ENCODE measurements at regions of chr18 and their contacts with region 1.

Region 1: DNA sequence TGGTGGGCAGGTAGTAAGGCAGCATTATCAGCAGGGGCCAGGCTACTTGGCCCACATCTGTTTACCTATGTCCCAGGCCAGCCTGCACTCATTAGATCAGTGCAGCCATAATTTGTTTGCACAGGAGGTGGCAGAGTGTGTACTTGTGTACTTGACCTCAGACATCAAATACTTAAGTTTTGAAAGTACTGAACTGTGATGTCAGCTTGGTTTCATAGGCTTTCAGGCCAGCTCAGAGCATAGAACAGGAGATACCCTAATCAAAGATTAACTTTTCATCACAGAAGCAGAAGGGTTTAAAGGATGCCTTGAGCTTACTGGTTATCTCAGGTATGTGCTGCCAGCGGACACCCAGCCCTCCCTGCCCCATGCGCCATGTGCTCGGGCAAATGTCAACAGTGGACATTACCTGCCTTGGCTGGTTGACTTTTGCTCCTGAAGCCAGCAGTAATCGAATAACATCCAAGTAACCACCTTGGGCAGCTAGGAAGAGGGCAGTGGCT is 33.2 kb downstream of the ANKRD29 start:
- DNase-seq: peak; percentile 27
- H3K4me3 ChIP-seq: no peak overlapping the region
- H3K27ac ChIP-seq: peak overlapping the region in 2 of 4 donors; percentile 8 to 32
- H3K4me1 ChIP-seq: peaks cover 0 to 23% (median 6%) of the 10 kb centered on the region in 4 donors
- H3K27me3 ChIP-seq: no peaks in the 10 kb centered on the region
- CTCF ChIP-seq: no peak
- EP300 ChIP-seq: no peak
- POLR2A ChIP-seq: no peak

Region 2: DNA sequence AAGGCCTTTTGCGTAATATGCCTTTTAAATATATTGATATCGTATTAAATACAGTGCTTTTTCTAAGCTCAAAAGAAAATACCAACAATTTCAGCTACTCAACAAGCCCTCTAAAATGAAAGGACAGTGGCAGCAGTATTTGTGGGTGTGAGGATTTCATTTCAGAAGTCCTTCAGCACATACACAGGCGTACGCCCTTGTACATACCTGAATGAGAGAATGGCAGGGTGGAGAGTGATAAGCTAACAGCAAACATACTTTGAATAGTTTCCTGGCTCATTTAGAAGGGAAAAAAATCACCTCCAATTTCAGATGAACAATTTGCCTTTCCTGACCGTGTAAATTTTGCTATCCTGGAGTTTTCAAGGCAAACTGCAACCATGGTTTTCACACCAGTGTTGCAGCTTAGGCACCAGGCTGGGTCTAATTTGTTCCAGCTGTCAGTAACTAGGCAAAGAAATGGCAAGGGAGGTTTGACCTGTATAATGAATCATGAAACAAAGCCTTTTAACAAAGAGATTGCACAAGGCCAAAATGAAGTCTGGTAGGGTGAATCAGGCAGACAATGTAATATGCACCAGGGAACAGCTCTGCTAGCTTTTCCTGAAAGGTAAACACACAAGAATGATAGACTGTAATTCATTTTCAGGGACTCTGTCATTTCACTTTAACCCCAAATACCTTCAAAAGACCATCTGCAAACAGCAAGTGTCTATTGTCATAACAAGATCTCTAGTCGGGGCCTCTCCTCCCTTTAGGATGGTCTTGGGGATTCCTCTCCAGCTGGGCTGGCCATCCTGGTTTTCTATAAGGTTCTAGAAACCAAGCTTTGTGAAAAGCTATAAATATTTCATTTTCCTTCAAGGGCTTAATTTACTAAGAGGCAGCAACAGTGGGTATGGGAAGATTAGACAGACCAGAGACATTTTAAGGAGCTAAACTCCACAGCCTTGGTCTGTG is 21.8 kb after region 1 on chr18:
- in situ Hi-C with region 1: no loop called
- intact Hi-C with region 1: no loop called
- DNase-seq: no peak
- H3K4me3 ChIP-seq: no peak overlapping the region
- H3K27ac ChIP-seq: no peak overlapping the region
- H3K4me1 ChIP-seq: peaks cover 0 to 5% (median 0%) of the 10 kb centered on the region in 4 donors
- H3K27me3 ChIP-seq: no peaks in the 10 kb centered on the region
- CTCF ChIP-seq: no peak
- EP300 ChIP-seq: no peak
- POLR2A ChIP-seq: no peak

Region 3: GRCh38 chr18:23689031-23689615 is 59.6 kb after region 1 on chr18 and contains the start of gene LAMA3:
- in situ Hi-C with region 1: loop called in 1 of 4 experiments (anchors 10 kb)
- intact Hi-C with region 1: no loop called
- DNase-seq: peak; percentile 61
- H3K4me3 ChIP-seq: peak within 1 kb of the TSS; percentile 26 to 60 (median 48)
- H3K27ac ChIP-seq: peak within 1 kb of the TSS in 1 of 4 donors; percentile 22
- H3K4me1 ChIP-seq: peaks cover 4 to 28% (median 23%) of the 10 kb centered on the region in 4 donors
- H3K27me3 ChIP-seq: peaks cover 45% of the 10 kb centered on the region
- CTCF ChIP-seq: peak in 1 of 5 experiments; percentile 21
- EP300 ChIP-seq: no peak
- POLR2A ChIP-seq: no peak
- total RNA-seq, gene LAMA3: 17.5 to 71.8 (median 47.4) TPM

Region 4: DNA sequence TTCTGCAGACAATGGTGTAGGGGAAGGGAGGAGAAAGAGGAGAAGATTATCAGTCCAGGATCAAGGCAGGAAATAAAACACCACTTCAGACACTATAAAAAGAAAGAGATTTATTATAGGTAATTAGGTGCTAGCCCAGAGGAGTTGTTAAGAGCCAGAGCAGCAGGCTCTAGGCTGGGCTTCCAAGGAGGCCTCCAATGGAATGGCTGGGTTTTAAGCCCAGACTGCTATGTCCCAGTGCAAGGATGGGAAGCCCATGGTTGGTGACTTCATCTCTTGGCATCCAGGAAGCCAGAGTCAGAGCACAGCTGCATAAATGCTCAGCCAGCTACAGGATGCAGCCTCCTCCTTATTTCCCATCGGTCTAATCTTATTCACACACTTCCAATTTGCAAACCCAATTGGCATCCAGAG is 155.3 kb after region 1 on chr18:
- in situ Hi-C with region 1: no loop called
- intact Hi-C with region 1: no loop called
- DNase-seq: peak; percentile 16
- H3K4me3 ChIP-seq: no peak overlapping the region
- H3K27ac ChIP-seq: no peak overlapping the region
- H3K4me1 ChIP-seq: peaks cover 0 to 12% (median 0%) of the 10 kb centered on the region in 4 donors
- H3K27me3 ChIP-seq: no peaks in the 10 kb centered on the region
- CTCF ChIP-seq: no peak
- EP300 ChIP-seq: no peak
- POLR2A ChIP-seq: no peak

Region 5: DNA sequence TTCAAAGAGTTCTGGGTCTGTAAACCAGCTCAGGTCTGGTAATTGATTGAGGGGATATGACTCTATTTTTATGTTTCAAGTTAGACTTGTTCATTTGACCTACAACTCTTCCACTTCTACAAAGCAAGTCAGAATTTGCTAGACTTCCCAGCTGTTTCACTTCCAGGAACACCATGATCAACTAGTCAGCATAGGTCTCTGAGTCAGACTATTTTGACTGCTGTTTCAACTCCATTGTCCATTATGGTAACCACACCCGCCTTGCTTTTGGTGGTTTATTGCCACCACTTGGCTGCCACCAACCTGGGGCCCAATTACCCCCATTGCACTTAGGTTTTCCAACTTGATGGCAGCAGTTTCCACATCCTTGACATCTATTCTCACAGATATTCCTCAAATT is 176.4 kb after region 1 on chr18:
- in situ Hi-C with region 1: loop called (anchors 10 to 25 kb)
- intact Hi-C with region 1: loop called (anchors 5 kb)
- DNase-seq: no peak
- H3K4me3 ChIP-seq: no peak overlapping the region
- H3K27ac ChIP-seq: no peak overlapping the region
- H3K4me1 ChIP-seq: no peaks in the 10 kb centered on the region
- H3K27me3 ChIP-seq: no peaks in the 10 kb centered on the region
- CTCF ChIP-seq: no peak
- EP300 ChIP-seq: no peak
- POLR2A ChIP-seq: no peak

Region 6: GRCh38 chr18:23812546-23813440 is 183.3 kb after region 1 on chr18:
- in situ Hi-C with region 1: loop called (anchors 10 to 25 kb)
- intact Hi-C with region 1: loop called (anchors 5 kb)
- DNase-seq: no peak
- H3K4me3 ChIP-seq: no peak overlapping the region
- H3K27ac ChIP-seq: no peak overlapping the region
- H3K4me1 ChIP-seq: no peaks in the 10 kb centered on the region
- H3K27me3 ChIP-seq: no peaks in the 10 kb centered on the region
- CTCF ChIP-seq: peak; percentile 52 to 60 (median 58)
- EP300 ChIP-seq: no peak
- POLR2A ChIP-seq: no peak

Region 7: GRCh38 chr18:23918401-23919032 is 289.0 kb after region 1 on chr18:
- in situ Hi-C with region 1: loop called in 2 of 4 experiments (anchors 25 kb)
- intact Hi-C with region 1: no loop called
- DNase-seq: peak; percentile 81
- H3K4me3 ChIP-seq: no peak overlapping the region
- H3K27ac ChIP-seq: no peak overlapping the region
- H3K4me1 ChIP-seq: peaks cover 0 to 8% (median 0%) of the 10 kb centered on the region in 4 donors
- H3K27me3 ChIP-seq: no peaks in the 10 kb centered on the region
- CTCF ChIP-seq: peak; percentile 75 to 84 (median 83)
- EP300 ChIP-seq: no peak
- POLR2A ChIP-seq: no peak

Region 8: GRCh38 chr18:24118750-24119577 is 489.5 kb after region 1 on chr18:
- in situ Hi-C with region 1: loop called in 2 of 4 experiments (anchors 25 kb)
- intact Hi-C with region 1: no loop called
- DNase-seq: peak; percentile 80
- H3K4me3 ChIP-seq: no peak overlapping the region
- H3K27ac ChIP-seq: no peak overlapping the region
- H3K4me1 ChIP-seq: no peaks in the 10 kb centered on the region
- H3K27me3 ChIP-seq: no peaks in the 10 kb centered on the region
- CTCF ChIP-seq: peak; percentile 88 to 97 (median 93)
- EP300 ChIP-seq: no peak
- POLR2A ChIP-seq: no peak

Measured in transverse colon (tissue), 4 donors.